AG04449 (cell line): ENCODE measurements at regions of chr10 and their contacts with region 1.

Region 1: GRCh38 chr10:74244097-74244685 is 93.2 kb downstream of the ADK start:
- DNase-seq: no peak
- H3K4me3 ChIP-seq: no peak overlapping the region
- CTCF ChIP-seq: peak; percentile 12

Region 2: GRCh38 chr10:74255214-74255613 is 11.0 kb after region 1 on chr10:
- CTCF ChIA-PET with region 1: interaction called, 33 read pairs
- POLR2A ChIA-PET with region 1: no interaction called
- DNase-seq: no peak
- H3K4me3 ChIP-seq: no peak overlapping the region
- CTCF ChIP-seq: no peak

Region 3: GRCh38 chr10:74332398-74332797 is 88.2 kb after region 1 on chr10:
- CTCF ChIA-PET with region 1: no interaction called
- POLR2A ChIA-PET with region 1: no interaction called
- DNase-seq: no peak
- H3K4me3 ChIP-seq: no peak overlapping the region
- CTCF ChIP-seq: no peak

Region 4: GRCh38 chr10:75019370-75019769 is 775.2 kb after region 1 on chr10:
- CTCF ChIA-PET with region 1: interaction called, 55 read pairs
- POLR2A ChIA-PET with region 1: no interaction called
- DNase-seq: no peak
- H3K4me3 ChIP-seq: no peak overlapping the region
- CTCF ChIP-seq: no peak

Region 5: DNA sequence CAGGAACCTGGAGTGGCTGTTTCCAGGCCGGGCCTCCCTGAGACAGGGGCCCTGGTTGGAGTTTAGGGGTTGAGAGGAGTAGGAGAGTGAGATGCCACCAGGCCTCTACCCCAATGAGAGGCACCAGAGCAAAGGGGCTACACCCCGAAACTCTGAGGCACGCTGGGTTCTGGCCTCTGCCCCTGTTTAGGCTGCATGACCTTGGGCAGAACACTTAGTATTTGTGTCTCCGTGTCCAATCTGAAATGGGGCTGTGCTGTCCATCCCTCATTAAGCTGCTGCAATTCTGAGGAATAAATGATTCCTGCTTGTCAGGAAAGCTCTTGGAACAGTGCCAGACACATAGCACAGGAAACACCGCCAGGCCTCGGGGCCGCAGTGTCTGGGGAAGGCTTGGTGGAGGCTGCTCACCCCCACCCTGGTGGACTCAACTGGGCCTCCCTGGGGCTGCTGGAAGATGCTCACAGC is 826.8 kb after region 1 on chr10:
- CTCF ChIA-PET with region 1: interaction called, 10 read pairs
- POLR2A ChIA-PET with region 1: no interaction called
- DNase-seq: no peak
- H3K4me3 ChIP-seq: no peak overlapping the region
- CTCF ChIP-seq: no peak

Region 6: DNA sequence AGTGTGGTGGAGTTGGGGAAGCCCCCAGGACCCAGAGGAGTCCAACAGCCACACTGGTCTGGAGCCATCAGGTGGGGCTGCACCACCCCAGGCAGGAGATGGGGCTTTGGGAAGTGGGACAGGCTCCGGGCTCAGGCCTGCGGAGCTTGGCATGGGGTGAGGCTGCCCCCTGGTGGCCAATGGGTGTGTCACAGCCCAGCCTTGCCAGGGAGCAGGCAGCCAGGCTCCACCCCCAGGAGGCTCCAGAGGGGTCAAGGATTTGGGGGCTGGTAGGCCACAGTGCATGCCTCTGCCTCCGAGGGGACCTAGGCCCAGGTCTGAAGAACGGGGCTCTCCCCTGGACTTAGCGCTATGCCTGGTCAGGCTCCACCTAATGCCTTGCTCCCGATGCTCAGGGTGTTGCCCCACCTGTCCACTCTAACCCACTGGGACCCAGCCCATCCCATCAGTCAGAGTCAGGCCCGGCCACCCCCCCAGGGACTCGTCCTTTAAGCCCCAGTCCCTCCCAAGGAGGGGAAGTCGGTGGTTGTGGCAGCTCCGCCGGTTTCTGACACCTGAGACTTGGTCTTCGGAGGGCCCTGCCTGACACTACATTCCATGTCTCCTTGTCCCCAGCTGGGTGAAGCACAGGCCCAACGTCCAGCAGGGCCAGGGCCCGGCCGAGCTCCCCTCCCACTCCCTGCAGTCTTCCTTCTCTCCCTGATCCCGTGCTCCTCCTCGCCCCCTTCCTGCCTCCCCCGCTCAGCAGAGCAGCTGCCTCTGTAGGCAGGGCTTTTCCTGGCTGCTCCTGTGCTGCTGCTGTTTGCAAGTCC is 856.0 kb after region 1 on chr10:
- CTCF ChIA-PET with region 1: interaction called, 319 read pairs
- POLR2A ChIA-PET with region 1: no interaction called
- DNase-seq: no peak
- H3K4me3 ChIP-seq: no peak overlapping the region
- CTCF ChIP-seq: peak; percentile 97

Region 7: GRCh38 chr10:75111367-75111906 is 867.2 kb after region 1 on chr10 and contains the start of gene SAMD8:
- CTCF ChIA-PET with region 1: interaction called, 48 read pairs
- POLR2A ChIA-PET with region 1: no interaction called
- DNase-seq: peak; percentile 71
- H3K4me3 ChIP-seq: peak within 1 kb of the TSS; percentile 82
- CTCF ChIP-seq: no peak